Mammary epithelial cell (primary cell): ENCODE measurements at regions of chr20 and their contacts with region 1.

Region 1: GRCh38 chr20:46132705-46133120 is 14.6 kb downstream of the CD40 start:
- DNase-seq: peak; percentile 59
- H3K4me3 ChIP-seq: no peak overlapping the region
- H3K27ac ChIP-seq: no peak overlapping the region
- H3K4me1 ChIP-seq: peaks cover 5% of the 10 kb centered on the region
- H3K27me3 ChIP-seq: peaks cover 2% of the 10 kb centered on the region
- CTCF ChIP-seq: peak; percentile 72 to 92

Region 2: DNA sequence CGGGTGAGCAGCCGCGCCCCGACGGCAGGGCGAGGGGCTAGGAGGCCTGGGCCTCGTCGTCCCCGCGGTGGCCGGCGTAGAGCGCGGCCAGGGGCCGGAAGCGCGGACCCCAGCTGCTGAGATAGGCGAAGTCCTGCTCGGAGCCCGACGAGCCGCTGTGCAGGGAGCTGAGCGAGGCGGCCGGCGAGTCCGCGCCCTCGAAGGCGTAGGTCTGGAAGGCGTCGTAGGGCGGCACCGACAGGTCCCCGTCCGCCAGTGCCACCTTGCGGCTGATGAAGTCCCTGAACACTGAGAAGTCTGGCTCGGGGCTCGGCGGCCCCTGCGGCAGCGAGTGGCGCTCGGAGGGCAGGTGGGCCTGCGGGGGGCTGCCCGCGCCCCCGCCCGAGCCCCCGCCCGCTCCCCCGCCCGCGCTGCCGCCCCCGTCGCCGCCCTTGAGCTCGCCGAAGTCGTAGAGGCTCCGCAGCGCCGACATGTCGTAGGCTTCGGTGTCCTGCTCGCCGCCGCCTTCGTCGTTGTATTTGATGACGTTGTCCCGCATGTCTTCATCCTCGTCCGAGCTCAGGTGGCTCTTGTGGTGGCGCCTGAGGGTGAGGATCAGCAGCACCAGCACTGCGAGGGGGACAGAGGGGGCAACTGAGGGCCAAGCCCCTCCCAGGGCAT is 41.9 kb after region 1 on chr20:
- CTCF ChIA-PET with region 1: interaction called, 4 read pairs
- dilution Hi-C with region 1: no loop called
- in situ Hi-C with region 1: no loop called
- intact Hi-C with region 1: loop called (anchors 1 kb)
- DNase-seq: peak; percentile 30
- H3K4me3 ChIP-seq: no peak overlapping the region
- H3K27ac ChIP-seq: no peak overlapping the region
- H3K4me1 ChIP-seq: no peaks in the 10 kb centered on the region
- H3K27me3 ChIP-seq: peaks cover 19% of the 10 kb centered on the region
- CTCF ChIP-seq: peak; percentile 44 to 76

Region 3: GRCh38 chr20:46307139-46307998 is 174.7 kb after region 1 on chr20:
- CTCF ChIA-PET with region 1: no interaction called
- dilution Hi-C with region 1: no loop called
- in situ Hi-C with region 1: no loop called
- intact Hi-C with region 1: loop called (anchors 2 kb)
- DNase-seq: peak; percentile 25
- H3K4me3 ChIP-seq: no peak overlapping the region
- H3K27ac ChIP-seq: no peak overlapping the region
- H3K4me1 ChIP-seq: peaks cover 8% of the 10 kb centered on the region
- H3K27me3 ChIP-seq: peaks cover 22% of the 10 kb centered on the region
- CTCF ChIP-seq: peak; percentile 70 to 94

Region 4: DNA sequence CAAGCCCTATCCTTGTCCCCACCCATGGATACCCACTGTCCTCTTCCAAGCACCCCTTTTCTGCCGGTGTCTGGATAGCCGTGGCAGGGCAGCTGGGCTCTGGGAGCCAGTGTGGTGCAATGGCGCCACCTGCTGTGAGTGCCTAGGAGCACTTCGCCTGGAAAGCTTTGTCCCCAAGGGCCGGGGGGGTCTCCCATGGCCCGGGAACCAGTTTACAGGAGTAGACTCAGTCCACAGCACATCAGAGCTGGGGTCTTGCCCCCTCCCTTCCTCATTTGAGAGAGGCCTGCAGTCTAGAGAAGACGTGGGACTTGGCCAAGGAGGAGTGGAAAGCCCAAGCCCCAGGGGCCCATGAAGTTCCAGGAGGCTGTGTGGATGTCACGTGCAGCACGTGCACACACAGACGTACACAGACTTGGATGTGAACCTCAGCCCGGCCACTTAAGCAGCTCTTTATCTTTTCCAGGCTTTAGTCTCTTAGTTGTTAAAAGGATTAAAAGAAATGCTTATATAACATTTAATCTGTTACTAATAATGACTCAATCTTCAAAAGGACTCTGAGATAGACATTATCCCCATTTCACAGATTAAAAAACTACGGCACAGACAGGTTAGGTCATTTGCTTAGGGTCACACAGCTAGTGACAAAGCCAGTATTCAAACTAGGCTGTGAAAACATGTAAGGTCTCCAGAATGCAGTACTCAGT is 216.5 kb after region 1 on chr20:
- CTCF ChIA-PET with region 1: no interaction called
- dilution Hi-C with region 1: no loop called
- in situ Hi-C with region 1: loop called in 1 of 2 experiments (anchors 25 kb)
- intact Hi-C with region 1: loop called (anchors 1 kb)
- DNase-seq: no peak
- H3K4me3 ChIP-seq: no peak overlapping the region
- H3K27ac ChIP-seq: no peak overlapping the region
- H3K4me1 ChIP-seq: peaks cover 11% of the 10 kb centered on the region
- H3K27me3 ChIP-seq: no peaks in the 10 kb centered on the region
- CTCF ChIP-seq: peak; percentile 66 to 92

Region 5: DNA sequence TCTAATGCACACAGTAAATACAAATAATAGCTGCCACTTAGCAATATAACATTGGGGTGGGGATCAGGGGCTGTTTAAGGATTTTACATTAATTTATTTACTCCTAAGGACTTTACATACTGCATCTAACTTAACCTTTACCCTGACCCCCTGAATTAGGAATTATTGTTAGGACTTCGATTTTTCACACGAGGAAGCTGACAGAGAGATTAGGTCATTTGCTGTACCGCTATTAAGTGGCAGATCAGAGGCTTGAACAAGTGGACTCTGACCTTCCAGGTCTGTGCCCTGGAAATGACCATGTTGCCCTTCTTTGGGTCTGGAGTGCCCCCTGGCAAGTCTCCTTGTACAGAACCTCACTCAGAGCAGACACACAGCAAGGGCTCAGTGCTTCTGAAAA is 278.9 kb after region 1 on chr20:
- CTCF ChIA-PET with region 1: interaction called, 6 read pairs
- dilution Hi-C with region 1: no loop called
- in situ Hi-C with region 1: no loop called
- intact Hi-C with region 1: loop called (anchors 1 kb)
- DNase-seq: no peak
- H3K4me3 ChIP-seq: no peak overlapping the region
- H3K27ac ChIP-seq: no peak overlapping the region
- H3K4me1 ChIP-seq: peaks cover 19% of the 10 kb centered on the region
- H3K27me3 ChIP-seq: no peaks in the 10 kb centered on the region
- CTCF ChIP-seq: no peak

Region 6: GRCh38 chr20:46689082-46689754 is 556.5 kb after region 1 on chr20 and contains the start of gene TP53RK:
- CTCF ChIA-PET with region 1: no interaction called
- dilution Hi-C with region 1: no loop called
- in situ Hi-C with region 1: no loop called
- intact Hi-C with region 1: loop called (anchors 10 kb)
- DNase-seq: peak; percentile 100
- H3K4me3 ChIP-seq: peak within 1 kb of the TSS; percentile 79 to 92 (median 85)
- H3K27ac ChIP-seq: peak within 1 kb of the TSS; percentile 81
- H3K4me1 ChIP-seq: peaks cover 4% of the 10 kb centered on the region
- H3K27me3 ChIP-seq: no peaks in the 10 kb centered on the region
- CTCF ChIP-seq: peak; percentile 7 to 29
- total RNA-seq, gene TP53RK: 14.4 to 18.7 TPM